CD4-positive, alpha-beta T cell (primary cell): ENCODE measurements at regions of chr7 and their contacts with region 1.

Region 1: DNA sequence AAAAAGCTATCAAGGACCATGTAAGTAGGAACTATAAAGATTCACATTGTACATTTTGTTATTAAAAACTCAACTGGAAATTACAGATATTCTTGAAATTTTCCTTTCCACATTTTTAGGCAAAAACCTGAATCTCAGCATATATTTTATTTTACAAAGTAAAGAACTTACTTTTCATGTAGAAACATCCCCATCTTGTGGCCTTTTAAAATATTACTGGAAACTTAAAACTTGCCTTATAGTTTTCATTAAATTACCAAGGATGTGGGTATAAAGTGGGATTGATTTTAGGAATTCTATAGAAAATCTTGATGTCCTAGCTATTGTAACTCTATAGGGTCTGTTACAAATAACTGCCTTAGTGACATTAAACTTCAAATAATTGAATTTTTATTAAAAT is 10.6 kb downstream of the DBF4 start:
- DNase-seq: peak in 3 of 14 experiments; percentile 61 to 64 (median 63)
- ATAC-seq: peak; percentile 34
- H3K4me3 ChIP-seq: no peak overlapping the region
- H3K4me3 Mint-ChIP-seq: no peak overlapping the region
- H3K27ac ChIP-seq: no peak overlapping the region
- H3K27ac Mint-ChIP-seq: no peak overlapping the region
- H3K4me1 ChIP-seq: no peaks in the 10 kb centered on the region
- H3K4me1 Mint-ChIP-seq: peaks cover 18% of the 10 kb centered on the region
- H3K27me3 ChIP-seq: no peaks in the 10 kb centered on the region
- H3K27me3 Mint-ChIP-seq: no peaks in the 10 kb centered on the region
- CTCF ChIP-seq: peak; percentile 83

Region 2: DNA sequence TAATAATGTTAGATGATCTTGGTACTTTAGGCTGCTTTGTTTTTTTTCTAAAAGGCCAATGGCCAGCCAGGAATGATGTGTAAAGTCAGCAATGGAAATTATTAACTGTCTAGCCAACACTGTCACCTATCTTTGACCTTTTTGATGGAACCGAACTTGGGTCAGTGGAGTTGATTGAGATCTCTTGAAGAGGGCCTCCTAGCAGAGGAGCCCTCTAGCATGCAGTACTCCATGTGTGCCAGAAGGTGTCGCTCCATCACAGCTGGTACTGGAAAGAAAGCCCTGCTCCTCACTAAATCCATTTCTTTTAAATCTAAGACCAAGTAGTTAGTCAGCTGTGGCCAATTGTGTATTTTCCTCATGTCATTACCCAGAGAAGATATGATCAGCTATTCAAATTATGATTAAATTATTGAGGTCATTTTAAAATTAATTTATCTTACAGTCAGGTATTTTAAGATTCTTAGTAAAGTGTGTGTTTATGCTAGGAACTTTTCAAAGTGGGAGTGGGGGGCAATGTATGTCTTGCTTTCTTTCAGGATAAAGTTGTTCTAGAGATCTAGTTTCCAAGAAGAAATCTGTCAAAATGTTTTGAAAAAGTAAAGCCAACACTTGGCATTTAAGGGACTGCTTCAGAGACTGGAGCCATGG is 574.5 kb before region 1 on chr7:
- CTCF ChIA-PET with region 1: interaction called, 3 read pairs
- POLR2A ChIA-PET with region 1: no interaction called
- intact Hi-C with region 1: loop called (anchors 1 to 5 kb)
- DNase-seq: peak; percentile 37 to 82 (median 54)
- ATAC-seq: peak; percentile 92
- H3K4me3 ChIP-seq: no peak overlapping the region
- H3K4me3 Mint-ChIP-seq: no peak overlapping the region
- H3K27ac ChIP-seq: no peak overlapping the region
- H3K27ac Mint-ChIP-seq: no peak overlapping the region
- H3K4me1 ChIP-seq: peaks cover 5% of the 10 kb centered on the region
- H3K4me1 Mint-ChIP-seq: peaks cover 8% of the 10 kb centered on the region
- H3K27me3 ChIP-seq: no peaks in the 10 kb centered on the region
- H3K27me3 Mint-ChIP-seq: no peaks in the 10 kb centered on the region
- CTCF ChIP-seq: peak; percentile 95

Region 3: GRCh38 chr7:87416682-87417587 is 469.9 kb before region 1 on chr7:
- CTCF ChIA-PET with region 1: no interaction called
- POLR2A ChIA-PET with region 1: no interaction called
- intact Hi-C with region 1: loop called (anchors 1 to 2 kb)
- DNase-seq: peak; percentile 32 to 82 (median 60)
- ATAC-seq: peak; percentile 63
- H3K4me3 ChIP-seq: no peak overlapping the region
- H3K4me3 Mint-ChIP-seq: no peak overlapping the region
- H3K27ac ChIP-seq: no peak overlapping the region
- H3K27ac Mint-ChIP-seq: no peak overlapping the region
- H3K4me1 ChIP-seq: no peaks in the 10 kb centered on the region
- H3K4me1 Mint-ChIP-seq: no peaks in the 10 kb centered on the region
- H3K27me3 ChIP-seq: no peaks in the 10 kb centered on the region
- H3K27me3 Mint-ChIP-seq: no peaks in the 10 kb centered on the region
- CTCF ChIP-seq: peak; percentile 76

Region 4: GRCh38 chr7:87506246-87507180 is 380.4 kb before region 1 on chr7:
- CTCF ChIA-PET with region 1: interaction called, 3 read pairs
- POLR2A ChIA-PET with region 1: no interaction called
- intact Hi-C with region 1: loop called (anchors 2 to 5 kb)
- DNase-seq: peak in 3 of 14 experiments; percentile 12 to 18 (median 15)
- ATAC-seq: no peak
- H3K4me3 ChIP-seq: no peak overlapping the region
- H3K4me3 Mint-ChIP-seq: no peak overlapping the region
- H3K27ac ChIP-seq: no peak overlapping the region
- H3K27ac Mint-ChIP-seq: no peak overlapping the region
- H3K4me1 ChIP-seq: no peaks in the 10 kb centered on the region
- H3K4me1 Mint-ChIP-seq: no peaks in the 10 kb centered on the region
- H3K27me3 ChIP-seq: no peaks in the 10 kb centered on the region
- H3K27me3 Mint-ChIP-seq: no peaks in the 10 kb centered on the region
- CTCF ChIP-seq: peak; percentile 16

Region 5: DNA sequence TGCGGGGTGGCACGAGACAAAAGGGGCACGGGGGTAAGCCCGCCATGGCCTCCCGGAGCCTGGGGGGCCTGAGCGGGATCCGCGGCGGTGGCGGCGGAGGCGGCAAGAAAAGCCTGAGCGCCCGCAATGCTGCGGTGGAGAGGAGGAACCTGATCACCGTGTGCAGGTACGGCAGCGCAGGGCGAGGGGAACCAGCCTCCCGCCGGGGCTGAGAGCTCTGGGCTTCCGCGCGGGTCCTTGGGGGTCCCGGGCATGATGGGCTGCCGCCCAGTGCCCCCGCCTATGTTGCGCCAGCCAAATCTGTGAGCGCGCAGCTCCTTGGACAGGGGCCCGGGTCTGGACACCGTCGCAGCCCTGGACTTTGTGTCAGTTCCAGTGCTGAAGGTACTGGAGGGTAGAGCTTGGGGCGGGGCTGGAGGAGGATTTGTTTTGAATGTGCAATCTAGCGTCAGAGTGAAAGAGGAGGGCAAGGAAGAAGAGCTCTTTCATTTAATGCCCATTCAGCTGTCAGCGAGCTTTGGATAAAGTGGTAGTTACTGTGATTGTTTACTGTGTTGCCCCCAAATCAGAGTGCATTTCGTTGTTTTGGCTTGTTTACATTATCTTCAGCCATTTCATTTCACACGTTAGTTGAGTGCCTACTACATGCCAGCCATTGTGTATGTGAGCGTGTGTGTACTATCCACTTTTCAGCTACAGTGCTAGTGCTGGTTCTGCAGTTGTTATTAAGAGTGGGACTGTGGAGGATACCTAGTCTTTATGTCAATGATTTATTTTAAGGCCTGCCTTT is 257.9 kb before region 1 on chr7:
- CTCF ChIA-PET with region 1: no interaction called
- POLR2A ChIA-PET with region 1: interaction called, 5 read pairs
- intact Hi-C with region 1: loop called in 1 of 2 experiments (anchors 5 kb)
- DNase-seq: peak in 11 of 14 experiments; percentile 1 to 50 (median 15)
- ATAC-seq: peak; percentile 28
- H3K4me3 ChIP-seq: peak overlapping the region; percentile 69
- H3K4me3 Mint-ChIP-seq: peak overlapping the region; percentile 87
- H3K27ac ChIP-seq: no peak overlapping the region
- H3K27ac Mint-ChIP-seq: peak overlapping the region; percentile 78
- H3K4me1 ChIP-seq: peaks cover 18% of the 10 kb centered on the region
- H3K4me1 Mint-ChIP-seq: peaks cover 18% of the 10 kb centered on the region
- H3K27me3 ChIP-seq: peaks cover 8 to 11% of the 10 kb centered on the region in 2 experiments
- H3K27me3 Mint-ChIP-seq: peaks cover 16% of the 10 kb centered on the region
- CTCF ChIP-seq: no peak

Region 6: GRCh38 chr7:87709258-87709657 is 177.6 kb before region 1 on chr7:
- CTCF ChIA-PET with region 1: no interaction called
- POLR2A ChIA-PET with region 1: no interaction called
- intact Hi-C with region 1: no loop called
- DNase-seq: no peak
- ATAC-seq: no peak
- H3K4me3 ChIP-seq: no peak overlapping the region
- H3K4me3 Mint-ChIP-seq: no peak overlapping the region
- H3K27ac ChIP-seq: no peak overlapping the region
- H3K27ac Mint-ChIP-seq: no peak overlapping the region
- H3K4me1 ChIP-seq: no peaks in the 10 kb centered on the region
- H3K4me1 Mint-ChIP-seq: no peaks in the 10 kb centered on the region
- H3K27me3 ChIP-seq: no peaks in the 10 kb centered on the region
- H3K27me3 Mint-ChIP-seq: peaks cover 5% of the 10 kb centered on the region
- CTCF ChIP-seq: no peak

Region 7: GRCh38 chr7:87797798-87798403 is 89.0 kb before region 1 on chr7:
- CTCF ChIA-PET with region 1: interaction called, 16 read pairs
- POLR2A ChIA-PET with region 1: no interaction called
- intact Hi-C with region 1: loop called (anchors 1 kb)
- DNase-seq: peak in 3 of 14 experiments; percentile 60 to 69 (median 65)
- ATAC-seq: peak; percentile 74
- H3K4me3 ChIP-seq: no peak overlapping the region
- H3K4me3 Mint-ChIP-seq: no peak overlapping the region
- H3K27ac ChIP-seq: no peak overlapping the region
- H3K27ac Mint-ChIP-seq: no peak overlapping the region
- H3K4me1 ChIP-seq: no peaks in the 10 kb centered on the region
- H3K4me1 Mint-ChIP-seq: no peaks in the 10 kb centered on the region
- H3K27me3 ChIP-seq: no peaks in the 10 kb centered on the region
- H3K27me3 Mint-ChIP-seq: peaks cover 13% of the 10 kb centered on the region
- CTCF ChIP-seq: peak; percentile 70

Region 8: GRCh38 chr7:87810130-87810529 is 76.7 kb before region 1 on chr7:
- CTCF ChIA-PET with region 1: no interaction called
- POLR2A ChIA-PET with region 1: no interaction called
- intact Hi-C with region 1: no loop called
- DNase-seq: no peak
- ATAC-seq: no peak
- H3K4me3 ChIP-seq: no peak overlapping the region
- H3K4me3 Mint-ChIP-seq: no peak overlapping the region
- H3K27ac ChIP-seq: no peak overlapping the region
- H3K27ac Mint-ChIP-seq: no peak overlapping the region
- H3K4me1 ChIP-seq: no peaks in the 10 kb centered on the region
- H3K4me1 Mint-ChIP-seq: no peaks in the 10 kb centered on the region
- H3K27me3 ChIP-seq: no peaks in the 10 kb centered on the region
- H3K27me3 Mint-ChIP-seq: no peaks in the 10 kb centered on the region
- CTCF ChIP-seq: no peak

Region 9: DNA sequence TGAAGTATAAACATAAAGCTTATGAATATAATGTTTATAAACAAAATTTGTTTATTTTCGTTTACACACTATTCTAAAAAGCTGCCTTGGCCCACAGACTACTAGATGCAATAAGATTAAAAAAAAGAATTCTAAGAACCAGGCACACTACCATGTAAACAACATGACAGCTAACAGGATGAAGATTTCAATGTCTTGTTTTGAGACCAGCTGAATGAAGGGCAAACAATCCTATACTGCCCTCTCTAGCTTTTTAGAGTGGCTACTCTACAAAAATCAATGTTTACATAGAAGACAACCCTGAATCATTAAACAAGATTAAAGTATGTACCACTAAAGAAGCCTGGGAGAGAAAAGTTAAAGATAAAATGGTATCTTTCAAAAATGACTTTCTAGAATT is 49.3 kb before region 1 on chr7:
- CTCF ChIA-PET with region 1: no interaction called
- POLR2A ChIA-PET with region 1: no interaction called
- intact Hi-C with region 1: no loop called
- DNase-seq: no peak
- ATAC-seq: no peak
- H3K4me3 ChIP-seq: no peak overlapping the region
- H3K4me3 Mint-ChIP-seq: no peak overlapping the region
- H3K27ac ChIP-seq: no peak overlapping the region
- H3K27ac Mint-ChIP-seq: no peak overlapping the region
- H3K4me1 ChIP-seq: no peaks in the 10 kb centered on the region
- H3K4me1 Mint-ChIP-seq: no peaks in the 10 kb centered on the region
- H3K27me3 ChIP-seq: no peaks in the 10 kb centered on the region
- H3K27me3 Mint-ChIP-seq: no peaks in the 10 kb centered on the region
- CTCF ChIP-seq: no peak

Region 10: GRCh38 chr7:87850836-87851593 is 35.9 kb before region 1 on chr7:
- CTCF ChIA-PET with region 1: no interaction called
- POLR2A ChIA-PET with region 1: no interaction called
- intact Hi-C with region 1: loop called in 1 of 2 experiments (anchors 2 kb)
- DNase-seq: no peak
- ATAC-seq: no peak
- H3K4me3 ChIP-seq: no peak overlapping the region
- H3K4me3 Mint-ChIP-seq: no peak overlapping the region
- H3K27ac ChIP-seq: no peak overlapping the region
- H3K27ac Mint-ChIP-seq: no peak overlapping the region
- H3K4me1 ChIP-seq: no peaks in the 10 kb centered on the region
- H3K4me1 Mint-ChIP-seq: peaks cover 4% of the 10 kb centered on the region
- H3K27me3 ChIP-seq: no peaks in the 10 kb centered on the region
- H3K27me3 Mint-ChIP-seq: no peaks in the 10 kb centered on the region
- CTCF ChIP-seq: no peak